Activated B cell treated with CpG ODN at 0.5 μM for 24 hours (primary cell): ENCODE measurements at regions of chr10 and their contacts with region 1.

Region 1: GRCh38 chr10:63241841-63242281 is 108.7 kb downstream of the NRBF2 start:
- DNase-seq: no peak
- ATAC-seq: peak; percentile 23
- H3K4me3 Mint-ChIP-seq: peak overlapping the region; percentile 29
- H3K27ac Mint-ChIP-seq: peak overlapping the region; percentile 74
- H3K4me1 Mint-ChIP-seq: peaks cover 87% of the 10 kb centered on the region
- H3K27me3 Mint-ChIP-seq: no peaks in the 10 kb centered on the region
- CTCF ChIP-seq: no peak

Region 2: DNA sequence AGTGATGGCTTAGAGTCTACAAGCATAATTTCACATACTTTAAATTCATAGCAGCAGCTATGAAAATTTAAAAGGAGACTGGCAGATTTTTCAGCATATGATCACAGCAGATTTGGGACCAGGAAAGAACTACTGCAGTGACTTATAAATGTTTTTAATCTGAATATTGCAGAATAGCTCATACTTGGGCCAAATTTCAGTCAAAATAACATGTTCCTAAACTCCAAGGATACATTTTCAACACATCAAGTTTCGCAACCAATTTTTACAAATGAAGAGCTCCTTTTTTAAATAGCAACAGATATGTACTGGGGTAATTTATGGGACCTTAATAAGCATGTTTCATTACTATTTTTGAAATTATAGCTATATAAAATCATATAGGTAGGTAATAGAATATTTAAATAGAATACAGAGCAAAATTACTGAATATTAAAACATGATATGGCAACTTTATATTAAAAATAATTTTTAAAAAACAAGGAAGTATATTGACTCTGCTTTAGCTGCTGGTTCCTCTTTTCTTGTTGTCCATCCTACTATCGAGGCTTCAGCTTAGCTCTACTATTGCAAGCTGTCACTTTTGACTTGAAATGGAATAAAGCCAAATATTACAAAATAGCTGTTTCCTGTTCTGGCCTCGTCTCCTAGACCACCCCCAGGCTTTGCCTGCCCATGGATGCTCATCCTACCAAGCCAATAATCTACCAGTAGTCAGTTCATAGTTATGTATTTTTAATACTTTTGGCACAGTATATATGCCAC is 14.3 kb after region 1 on chr10:
- CTCF ChIA-PET with region 1: no interaction called
- POLR2A ChIA-PET with region 1: interaction called, 9 read pairs
- intact Hi-C with region 1: loop called (anchors 1 kb)
- DNase-seq: no peak
- ATAC-seq: peak; percentile 40
- H3K4me3 Mint-ChIP-seq: peak overlapping the region; percentile 73
- H3K27ac Mint-ChIP-seq: peak overlapping the region; percentile 84
- H3K4me1 Mint-ChIP-seq: peaks cover 94% of the 10 kb centered on the region
- H3K27me3 Mint-ChIP-seq: no peaks in the 10 kb centered on the region
- CTCF ChIP-seq: no peak

Region 3: DNA sequence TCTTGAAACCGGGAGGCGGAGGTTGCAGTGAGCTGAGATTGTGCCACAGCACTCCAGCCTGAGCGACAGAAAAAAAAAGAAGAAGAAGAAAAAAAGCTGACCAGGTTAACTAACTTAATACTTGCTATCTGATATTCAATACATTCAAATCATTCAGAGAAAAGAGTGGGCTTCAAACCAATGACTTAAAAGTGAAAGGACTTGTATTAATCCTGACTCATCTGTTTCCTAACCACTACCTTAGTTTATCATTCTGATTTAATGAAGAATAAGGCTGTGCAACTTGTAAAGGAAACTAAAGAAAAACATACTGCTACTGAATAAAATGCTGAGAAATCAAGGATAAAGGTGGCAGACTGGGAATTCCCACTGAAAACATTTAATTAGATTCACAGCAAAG is 19.6 kb after region 1 on chr10:
- CTCF ChIA-PET with region 1: no interaction called
- POLR2A ChIA-PET with region 1: interaction called, 28 read pairs
- intact Hi-C with region 1: loop called (anchors 1 kb)
- DNase-seq: no peak
- ATAC-seq: peak; percentile 26
- H3K4me3 Mint-ChIP-seq: peak overlapping the region; percentile 82
- H3K27ac Mint-ChIP-seq: peak overlapping the region; percentile 91
- H3K4me1 Mint-ChIP-seq: peaks cover 78% of the 10 kb centered on the region
- H3K27me3 Mint-ChIP-seq: no peaks in the 10 kb centered on the region
- CTCF ChIP-seq: no peak

Region 4: GRCh38 chr10:63396133-63396761 is 154.4 kb after region 1 on chr10:
- CTCF ChIA-PET with region 1: no interaction called
- POLR2A ChIA-PET with region 1: interaction called, 12 read pairs
- intact Hi-C with region 1: no loop called
- DNase-seq: no peak
- ATAC-seq: no peak
- H3K4me3 Mint-ChIP-seq: no peak overlapping the region
- H3K27ac Mint-ChIP-seq: no peak overlapping the region
- H3K4me1 Mint-ChIP-seq: no peaks in the 10 kb centered on the region
- H3K27me3 Mint-ChIP-seq: no peaks in the 10 kb centered on the region
- CTCF ChIP-seq: no peak